ENCODE measurements at regions of chrX and their contacts with region 1.

Region 1: GRCh38 chrX:87040039-87040438 is 477.6 kb upstream of the KLHL4 start:
- DNase-seq: no peak
- ATAC-seq: no peak
- H3K4me3 ChIP-seq: no peak overlapping the region
- H3K27ac ChIP-seq: no peak overlapping the region
- H3K4me1 ChIP-seq: no peaks in the 10 kb centered on the region
- H3K27me3 ChIP-seq: no peaks in the 10 kb centered on the region
- CTCF ChIP-seq: no peak
- POLR2A ChIP-seq: no peak
- RAD21 ChIP-seq: no peak

Region 2: GRCh38 chrX:87167841-87168240 is 127.8 kb after region 1 on chrX:
- CTCF ChIA-PET with region 1: no interaction called
- POLR2A ChIA-PET with region 1: no interaction called
- dilution Hi-C with region 1: no loop called
- in situ Hi-C with region 1: no loop called
- intact Hi-C with region 1: loop called (anchors 10 kb)
- DNase-seq: no peak
- ATAC-seq: no peak
- H3K4me3 ChIP-seq: no peak overlapping the region
- H3K27ac ChIP-seq: no peak overlapping the region
- H3K4me1 ChIP-seq: no peaks in the 10 kb centered on the region
- H3K27me3 ChIP-seq: no peaks in the 10 kb centered on the region
- CTCF ChIP-seq: no peak
- POLR2A ChIP-seq: no peak
- RAD21 ChIP-seq: no peak

Region 3: GRCh38 chrX:87846956-87847355 is 806.9 kb after region 1 on chrX:
- CTCF ChIA-PET with region 1: no interaction called
- POLR2A ChIA-PET with region 1: no interaction called
- dilution Hi-C with region 1: no loop called
- in situ Hi-C with region 1: no loop called
- intact Hi-C with region 1: no loop called
- DNase-seq: no peak
- ATAC-seq: no peak
- H3K4me3 ChIP-seq: no peak overlapping the region
- H3K27ac ChIP-seq: no peak overlapping the region
- H3K4me1 ChIP-seq: no peaks in the 10 kb centered on the region
- H3K27me3 ChIP-seq: no peaks in the 10 kb centered on the region
- CTCF ChIP-seq: no peak
- POLR2A ChIP-seq: no peak
- RAD21 ChIP-seq: no peak